Left colon (tissue), 2 donors: ENCODE measurements at regions of chr7 and their contacts with region 1.

Region 1: DNA sequence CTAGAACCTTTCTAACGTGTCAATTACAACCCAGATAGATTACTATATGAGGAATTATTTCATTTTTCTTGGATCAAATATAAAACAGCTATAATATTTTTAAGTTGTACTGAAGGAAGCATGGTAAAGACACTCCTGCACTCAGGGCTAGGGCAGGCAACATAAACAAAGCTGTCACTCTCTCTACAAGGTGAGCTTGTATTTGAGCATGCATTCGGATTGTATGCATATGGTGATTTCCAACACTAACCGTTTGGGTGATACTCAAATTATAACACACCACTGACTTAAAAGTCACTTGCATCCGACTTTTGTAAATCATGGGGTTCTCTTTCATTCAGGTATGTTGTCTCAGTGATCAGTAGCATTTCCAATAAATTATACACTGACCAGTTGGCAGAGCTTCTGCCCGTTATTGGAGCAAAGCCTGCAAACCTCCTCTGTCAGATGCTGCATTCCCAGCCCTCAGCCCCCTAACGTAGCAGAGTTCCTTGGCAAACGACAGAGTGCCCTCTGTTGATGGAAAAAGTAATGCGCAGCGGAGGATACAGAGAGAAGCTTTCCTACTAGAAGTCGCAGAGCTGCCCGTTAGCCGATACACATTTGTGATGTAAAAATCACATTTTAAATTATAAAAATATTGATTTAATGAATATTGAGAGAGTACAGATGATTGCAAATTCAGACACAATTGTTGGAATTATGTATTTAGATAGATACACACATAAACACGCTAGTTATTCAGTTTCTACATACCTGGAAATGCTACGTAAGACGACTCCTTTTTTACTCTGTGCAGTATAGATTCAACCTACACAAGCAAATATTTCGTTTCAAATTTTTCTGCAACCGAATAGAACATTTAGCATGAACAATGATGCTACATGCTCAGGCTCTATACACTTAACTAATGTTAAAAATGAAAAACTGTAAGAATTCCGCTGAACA is 173.9 kb upstream of the SP4 start:
- DNase-seq: peak in 1 of 2 donors; percentile 59
- ATAC-seq: peak; percentile 75

Region 2: GRCh38 chr7:20778063-20778721 is 475.8 kb before region 1 on chr7:
- intact Hi-C with region 1: loop called in 1 of 2 experiments (anchors 10 kb)
- DNase-seq: peak in 1 of 2 donors; percentile 38
- ATAC-seq: peak; percentile 98

Region 3: GRCh38 chr7:21128062-21128817 is 125.8 kb before region 1 on chr7:
- intact Hi-C with region 1: no loop called
- DNase-seq: no peak
- ATAC-seq: peak; percentile 22

Region 4: DNA sequence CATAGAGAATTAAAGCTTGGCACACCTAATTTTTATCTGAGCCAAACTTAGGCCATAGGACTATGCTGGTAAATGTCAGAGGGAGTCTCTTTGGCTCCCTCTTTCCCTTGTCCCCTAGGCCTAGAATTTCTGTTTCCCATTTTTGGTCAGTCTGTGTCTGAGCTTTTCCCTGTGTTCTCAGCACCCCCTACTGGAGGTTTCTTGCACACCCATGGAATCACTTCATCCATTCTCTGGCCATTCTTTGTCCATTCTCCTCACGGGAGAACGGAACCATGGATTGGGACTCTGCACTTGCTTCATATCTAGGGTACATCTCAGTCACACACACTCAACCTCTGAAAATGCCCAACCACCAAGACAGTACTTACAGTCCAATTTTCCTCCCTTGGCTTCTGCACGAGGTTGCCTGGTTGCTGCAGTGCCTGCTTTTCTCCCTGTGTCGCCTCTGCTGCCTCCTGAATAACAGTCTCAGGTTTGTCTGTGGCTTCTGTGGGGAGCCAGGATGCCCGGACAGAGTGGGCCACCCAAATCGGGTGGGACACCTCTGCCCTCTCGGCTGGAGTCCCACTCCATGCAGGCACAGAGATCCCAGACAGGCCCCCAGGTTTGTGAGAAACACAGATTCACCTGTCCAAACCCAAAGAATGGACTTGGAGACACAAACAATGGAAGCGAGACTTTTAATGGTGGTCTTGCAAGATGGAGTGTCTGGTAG is 253.8 kb after region 1 on chr7:
- intact Hi-C with region 1: loop called in 1 of 2 experiments (anchors 10 kb)
- DNase-seq: peak in 1 of 2 donors; percentile 59
- ATAC-seq: peak; percentile 78